ENCODE measurements at regions of chr1 and their contacts with region 1.

Region 1: DNA sequence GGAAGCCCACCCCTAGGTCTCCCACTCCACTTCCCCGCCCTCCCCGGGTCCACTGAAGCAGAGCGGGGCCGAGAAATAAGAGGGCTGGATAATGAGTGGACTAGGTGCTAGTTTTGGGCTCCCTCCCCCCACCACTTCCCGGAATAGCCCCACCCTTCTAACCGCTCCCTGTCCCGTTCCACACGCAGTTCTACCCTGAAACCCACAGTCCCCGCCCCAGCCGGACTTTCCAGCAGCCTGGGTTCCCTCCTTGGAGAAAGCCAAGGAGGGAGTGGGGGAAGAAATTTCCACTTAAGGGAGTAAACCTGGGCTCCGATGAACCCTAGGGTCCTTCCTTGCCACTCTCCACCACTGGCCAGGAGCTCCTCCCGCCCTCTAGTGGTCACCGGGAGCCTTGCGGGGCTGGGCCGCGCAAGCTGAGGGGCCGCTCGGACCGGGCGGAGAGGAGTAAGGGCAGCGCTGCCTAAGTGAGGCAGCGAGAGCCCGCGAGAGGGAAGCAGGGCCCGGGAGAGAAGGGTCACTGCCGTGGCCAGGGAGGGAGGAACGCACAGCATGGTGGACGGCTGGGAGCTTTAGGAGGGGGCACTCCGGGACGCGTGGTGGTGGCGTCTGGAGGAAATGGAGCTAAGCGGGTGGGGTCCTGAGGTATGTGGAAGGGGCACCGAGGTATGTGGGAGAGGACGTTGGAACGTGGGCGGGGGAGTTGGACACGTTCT is 14.3 kb downstream of the THBS3 start:
- DNase-seq: peak; percentile 87
- H3K4me3 Mint-ChIP-seq: peak overlapping the region; percentile 86
- H3K27ac Mint-ChIP-seq: peak overlapping the region; percentile 96
- H3K4me1 Mint-ChIP-seq: peaks cover 25% of the 10 kb centered on the region
- H3K27me3 Mint-ChIP-seq: no peaks in the 10 kb centered on the region

Region 2: DNA sequence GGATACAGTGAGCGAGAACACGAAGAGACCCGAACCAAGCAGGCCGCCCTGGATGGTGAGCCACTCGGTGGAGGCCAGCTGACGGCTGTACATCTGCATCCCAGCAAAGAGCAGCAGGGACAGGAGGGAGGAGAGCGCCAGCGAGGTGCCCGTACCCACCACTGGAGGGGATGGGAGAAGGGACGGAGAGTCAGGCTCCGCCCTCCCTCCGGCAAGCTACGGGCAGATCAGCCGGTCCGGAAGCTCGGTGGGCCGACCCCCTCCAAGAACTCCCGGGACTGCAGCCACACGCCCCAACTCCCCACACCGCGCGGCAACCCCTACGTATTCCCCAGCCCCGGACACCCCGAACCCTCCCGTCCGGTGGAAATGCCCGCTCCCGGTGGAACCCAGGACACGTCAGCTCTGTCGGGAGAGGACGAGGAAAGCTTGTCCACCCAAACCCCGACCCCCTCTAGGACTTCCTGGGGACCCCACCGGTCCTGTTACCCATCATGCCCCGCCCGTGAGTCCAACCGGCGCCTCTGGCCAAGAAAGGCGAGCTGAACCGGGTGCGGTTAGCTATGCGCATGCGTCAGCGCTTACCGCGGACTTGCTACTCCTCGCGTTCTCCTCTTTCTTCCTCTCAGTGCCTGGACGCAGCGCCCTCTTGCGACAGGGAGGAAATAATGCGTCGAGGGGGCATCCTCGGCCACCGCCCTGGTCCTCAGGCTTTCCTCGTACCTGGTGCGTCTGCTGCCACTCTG is 20.5 kb before region 1 on chr1 and contains the start of gene KRTCAP2:
- CTCF ChIA-PET with region 1: interaction called, 201 read pairs
- POLR2A ChIA-PET with region 1: interaction called, 70 read pairs
- intact Hi-C with region 1: loop called (anchors 2 kb)
- DNase-seq: peak; percentile 98
- H3K4me3 Mint-ChIP-seq: peak within 1 kb of the TSS; percentile 93
- H3K27ac Mint-ChIP-seq: peak within 1 kb of the TSS; percentile 96
- H3K4me1 Mint-ChIP-seq: peaks cover 48% of the 10 kb centered on the region
- H3K27me3 Mint-ChIP-seq: no peaks in the 10 kb centered on the region
- total RNA-seq, gene KRTCAP2: 138 to 146 TPM

Region 3: DNA sequence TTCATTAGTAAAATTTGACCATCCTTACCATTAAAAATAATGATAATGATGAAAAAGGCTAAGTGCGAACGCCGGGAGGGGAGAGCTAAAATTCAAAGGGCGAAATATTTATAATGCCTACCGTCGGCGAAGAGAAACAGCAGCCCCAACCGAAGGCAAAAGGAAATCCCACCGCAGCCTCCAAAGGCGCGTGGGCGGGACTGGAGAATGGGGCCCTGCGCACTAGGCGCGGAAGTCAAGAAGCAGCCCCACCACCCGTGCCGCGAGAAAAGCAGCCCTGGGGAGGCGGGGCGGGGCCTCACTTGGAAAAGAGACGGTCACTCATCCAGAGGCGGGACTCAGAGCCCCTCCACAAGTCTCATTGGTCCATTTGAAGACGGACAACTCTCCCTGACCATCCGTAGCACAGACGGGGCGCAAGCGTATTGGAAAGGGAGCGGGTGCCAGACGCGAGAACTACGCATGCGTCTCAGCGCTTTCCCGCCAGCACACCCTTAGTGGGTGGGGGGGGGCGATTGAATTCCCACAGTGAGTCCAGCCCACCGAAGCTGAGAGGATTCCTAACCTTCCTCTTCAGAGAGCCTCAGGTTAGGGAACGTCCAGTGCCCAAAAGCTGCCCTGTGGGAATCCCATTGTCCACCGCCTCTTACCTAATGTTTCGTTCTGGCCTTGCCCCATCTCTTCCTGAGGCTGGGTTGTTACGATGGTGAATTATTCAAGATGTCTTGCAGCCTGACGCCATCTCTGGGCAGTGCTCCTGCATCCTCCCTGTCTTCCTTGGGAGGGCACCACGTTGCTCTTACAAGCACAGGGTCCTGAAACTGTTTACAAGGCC is 34.0 kb after region 1 on chr1:
- CTCF ChIA-PET with region 1: interaction called, 15 read pairs
- POLR2A ChIA-PET with region 1: interaction called, 15 read pairs
- intact Hi-C with region 1: loop called (anchors 5 kb)
- DNase-seq: peak; percentile 100
- H3K4me3 Mint-ChIP-seq: peak overlapping the region; percentile 89
- H3K27ac Mint-ChIP-seq: peak overlapping the region; percentile 98
- H3K4me1 Mint-ChIP-seq: peaks cover 26% of the 10 kb centered on the region
- H3K27me3 Mint-ChIP-seq: no peaks in the 10 kb centered on the region

Region 4: DNA sequence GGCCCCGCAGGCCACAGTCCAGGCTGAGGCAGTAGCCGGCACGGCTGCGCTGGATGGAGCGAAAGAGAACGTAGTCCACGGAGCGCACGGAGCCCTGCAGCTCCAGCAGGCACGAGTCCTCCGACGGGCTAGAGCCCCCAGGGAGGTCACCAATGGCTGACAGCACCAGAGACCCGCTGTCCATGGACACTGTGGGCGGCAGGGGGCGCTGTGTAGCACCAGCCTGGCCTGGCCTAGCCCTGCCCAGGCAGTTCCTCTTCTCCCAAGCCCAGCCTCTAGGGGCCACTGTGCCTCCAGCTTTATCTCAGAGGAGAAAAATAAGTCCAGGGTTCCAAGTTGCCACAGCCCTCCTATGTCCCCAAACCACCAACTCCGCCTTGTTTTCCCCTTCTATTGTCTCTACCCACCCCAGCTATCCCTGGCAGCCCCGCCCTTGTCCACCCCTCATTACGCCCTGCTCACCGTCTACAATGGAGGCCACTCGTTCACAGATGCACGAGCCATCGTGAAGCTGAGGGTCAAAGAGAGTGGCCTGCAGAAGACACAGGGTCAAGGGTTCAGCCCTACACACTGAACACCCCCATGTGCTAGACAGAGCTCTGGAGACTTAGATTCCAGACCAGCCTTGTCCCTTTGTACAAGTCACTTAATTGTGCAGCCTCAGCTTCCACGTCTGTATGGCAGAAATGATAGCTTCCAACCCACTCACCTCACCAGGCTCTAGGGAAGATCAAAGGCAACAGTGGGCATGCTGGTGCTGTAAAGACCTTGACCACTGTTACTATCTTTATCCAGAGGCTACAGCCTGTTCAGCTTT is 57.4 kb after region 1 on chr1:
- CTCF ChIA-PET with region 1: interaction called, 19 read pairs
- POLR2A ChIA-PET with region 1: interaction called, 4 read pairs
- intact Hi-C with region 1: no loop called
- DNase-seq: peak; percentile 97
- H3K4me3 Mint-ChIP-seq: peak overlapping the region; percentile 39
- H3K27ac Mint-ChIP-seq: peak overlapping the region; percentile 31
- H3K4me1 Mint-ChIP-seq: peaks cover 33% of the 10 kb centered on the region
- H3K27me3 Mint-ChIP-seq: no peaks in the 10 kb centered on the region

Region 5: GRCh38 chr1:155688324-155689080 is 495.1 kb after region 1 on chr1 and contains the start of gene YY1AP1:
- CTCF ChIA-PET with region 1: no interaction called
- POLR2A ChIA-PET with region 1: no interaction called
- intact Hi-C with region 1: loop called (anchors 5 kb)
- DNase-seq: peak; percentile 93
- H3K4me3 Mint-ChIP-seq: peak within 1 kb of the TSS; percentile 97
- H3K27ac Mint-ChIP-seq: peak within 1 kb of the TSS; percentile 94
- H3K4me1 Mint-ChIP-seq: peaks cover 60% of the 10 kb centered on the region
- H3K27me3 Mint-ChIP-seq: no peaks in the 10 kb centered on the region
- total RNA-seq, gene YY1AP1: 56.2 to 62.1 TPM

Measured in activated CD4-positive, alpha-beta memory T cell treated with anti-CD3 and anti-CD28 coated beads for 36 hours (primary cell).